ENCODE measurements at regions of chr2 and their contacts with region 1.

Region 1: DNA sequence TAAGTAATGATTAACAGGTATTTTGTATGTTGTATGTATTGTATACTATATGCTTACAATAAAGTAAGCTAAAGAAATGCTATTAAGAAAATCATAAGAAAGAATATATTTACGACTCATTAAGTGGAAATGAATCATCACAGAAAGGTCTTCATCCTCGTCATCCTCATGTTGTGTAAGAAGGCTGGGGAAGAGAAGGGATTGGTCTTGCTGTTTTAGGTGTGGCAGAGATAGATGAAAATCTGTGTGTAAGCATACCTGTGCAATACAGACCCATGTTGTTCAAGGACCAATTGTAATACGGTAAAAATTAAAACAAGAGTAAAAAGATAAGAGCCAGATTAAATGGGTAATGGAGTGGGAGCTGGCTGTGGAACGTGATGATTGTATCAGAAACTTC is 16.6 kb downstream of the SLC35F5 start:
- DNase-seq: no peak
- H3K4me3 ChIP-seq: no peak overlapping the region
- H3K27ac ChIP-seq: no peak overlapping the region
- H3K4me1 ChIP-seq: no peaks in the 10 kb centered on the region
- H3K27me3 ChIP-seq: no peaks in the 10 kb centered on the region
- CTCF ChIP-seq: no peak

Region 2: DNA sequence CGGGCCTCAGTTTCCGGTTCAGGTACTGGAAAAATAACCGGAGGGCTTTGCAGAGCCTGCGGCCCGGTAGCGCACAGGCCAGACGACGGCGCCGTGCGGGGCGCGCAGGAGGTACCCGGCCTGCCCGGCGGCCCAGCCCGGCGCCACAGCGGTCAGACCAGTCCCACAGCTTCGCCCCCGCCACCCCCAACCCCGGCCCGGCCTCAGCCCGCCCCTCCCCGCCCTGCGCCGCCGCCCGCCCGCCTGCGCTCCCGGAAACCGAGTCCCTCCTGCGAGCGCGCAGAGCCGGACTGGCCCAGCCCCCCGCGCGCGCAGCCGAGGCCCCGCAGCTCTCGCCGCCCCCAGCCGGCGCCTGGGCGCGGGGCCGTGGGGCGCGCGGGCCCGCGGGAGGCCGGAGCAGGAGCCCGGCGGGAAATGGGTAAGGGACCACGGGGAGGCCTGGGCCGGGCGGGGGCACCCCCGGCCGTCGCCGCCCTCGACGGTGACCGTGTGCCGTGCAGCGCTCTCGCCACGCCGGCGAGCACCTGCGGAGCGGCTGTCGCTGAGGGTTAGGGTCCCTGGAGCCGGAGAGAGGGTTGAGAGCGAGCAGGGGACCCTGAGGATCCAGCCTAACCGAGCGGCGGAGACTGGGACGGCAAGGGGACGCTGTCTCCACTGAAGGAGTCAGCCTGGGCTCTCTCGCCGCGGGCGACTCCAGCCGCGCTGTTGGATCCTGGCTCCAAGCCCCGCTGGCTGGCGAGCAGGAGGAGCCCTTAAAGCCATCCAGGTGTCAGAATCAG is 582.5 kb before region 1 on chr2:
- intact Hi-C with region 1: no loop called
- DNase-seq: peak; percentile 76
- H3K4me3 ChIP-seq: peak overlapping the region; percentile 72
- H3K27ac ChIP-seq: peak overlapping the region; percentile 79
- H3K4me1 ChIP-seq: peaks cover 6% of the 10 kb centered on the region
- H3K27me3 ChIP-seq: no peaks in the 10 kb centered on the region
- CTCF ChIP-seq: no peak

Region 3: DNA sequence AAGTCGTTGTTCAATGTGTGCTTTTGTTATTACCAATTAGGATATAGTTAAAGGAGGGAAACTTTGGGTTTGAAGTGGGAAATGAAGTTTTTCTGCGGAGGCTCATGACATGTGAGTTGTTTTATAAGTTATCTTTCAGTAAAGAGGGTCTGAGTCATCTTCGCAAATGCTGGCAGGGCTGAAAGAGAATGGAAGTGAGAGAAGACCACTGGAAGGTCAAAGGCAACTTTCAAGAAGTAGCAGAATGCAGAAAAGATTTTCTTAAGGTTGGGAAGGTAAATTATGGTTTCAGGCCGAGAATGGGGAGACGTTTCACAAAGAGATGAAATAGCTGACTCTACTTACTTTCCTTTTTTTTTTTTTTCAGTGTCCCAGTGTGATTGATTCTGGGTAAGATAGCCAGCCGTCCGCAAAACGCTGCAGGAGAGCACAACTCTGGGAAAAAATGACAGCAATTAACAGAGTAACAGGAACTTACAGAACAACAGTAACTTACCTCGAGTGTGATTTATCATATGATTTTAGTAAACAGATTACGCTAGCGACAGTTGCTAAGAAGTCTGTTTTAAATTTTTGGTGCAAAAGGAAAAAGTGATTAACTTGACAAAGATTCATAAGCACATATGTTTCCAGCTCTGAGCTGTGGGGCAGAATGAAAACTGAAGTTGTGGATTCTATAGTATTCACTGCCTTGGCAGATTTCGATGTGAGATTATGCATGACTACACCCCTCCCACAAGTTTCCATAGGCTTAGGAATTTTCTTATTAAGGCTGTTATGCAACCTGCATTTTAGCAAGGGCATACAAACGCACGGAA is 103.3 kb after region 1 on chr2:
- intact Hi-C with region 1: no loop called
- DNase-seq: no peak
- H3K4me3 ChIP-seq: no peak overlapping the region
- H3K27ac ChIP-seq: no peak overlapping the region
- H3K4me1 ChIP-seq: no peaks in the 10 kb centered on the region
- H3K27me3 ChIP-seq: no peaks in the 10 kb centered on the region
- CTCF ChIP-seq: no peak

Region 4: DNA sequence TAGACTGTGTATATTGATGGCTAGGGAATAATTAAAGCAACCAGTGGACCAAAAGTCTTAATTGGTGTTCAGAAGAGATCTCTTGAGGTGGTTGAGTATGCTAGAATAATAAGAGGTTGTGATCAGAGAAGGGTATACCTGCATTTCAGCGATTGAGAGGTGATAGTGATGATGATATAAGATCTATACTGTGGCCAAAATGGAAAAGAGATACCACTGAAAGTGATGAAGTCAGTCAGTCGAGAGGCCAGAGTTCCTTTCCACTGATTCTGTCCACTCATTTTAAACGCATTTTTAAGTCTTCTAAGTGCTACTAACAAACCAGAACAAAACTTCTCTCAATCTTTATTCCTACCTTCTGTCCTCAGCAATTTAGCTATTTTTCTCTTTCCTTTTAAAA is 182.9 kb after region 1 on chr2:
- intact Hi-C with region 1: no loop called
- DNase-seq: no peak
- H3K4me3 ChIP-seq: no peak overlapping the region
- H3K27ac ChIP-seq: no peak overlapping the region
- H3K4me1 ChIP-seq: no peaks in the 10 kb centered on the region
- H3K27me3 ChIP-seq: no peaks in the 10 kb centered on the region
- CTCF ChIP-seq: no peak

Region 5: DNA sequence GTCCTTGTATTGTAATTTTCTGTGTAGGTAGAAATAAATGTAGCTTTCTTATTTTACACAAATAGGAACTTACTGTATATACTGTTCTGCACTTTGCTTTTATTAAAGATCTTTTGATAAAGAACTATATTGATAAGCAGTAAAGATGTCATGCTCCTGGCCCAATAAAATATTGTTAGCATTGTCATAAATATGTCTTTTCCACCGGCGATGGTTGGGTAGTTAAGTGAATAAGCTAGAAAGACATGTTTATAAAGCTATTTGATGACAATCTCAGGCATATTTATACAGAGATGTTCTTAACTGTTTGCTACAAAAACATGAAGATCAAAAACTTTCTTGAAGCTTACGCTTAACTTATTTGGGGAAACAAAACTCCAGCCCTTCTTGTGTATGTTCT is 219.4 kb after region 1 on chr2:
- intact Hi-C with region 1: loop called (anchors 10 kb)
- DNase-seq: no peak
- H3K4me3 ChIP-seq: no peak overlapping the region
- H3K27ac ChIP-seq: no peak overlapping the region
- H3K4me1 ChIP-seq: no peaks in the 10 kb centered on the region
- H3K27me3 ChIP-seq: no peaks in the 10 kb centered on the region
- CTCF ChIP-seq: no peak